K562 (cell line): ENCODE measurements at regions of chr7 and their contacts with region 1.

Region 1: GRCh38 chr7:107044347-107045194 is at the start of gene PRKAR2B:
- DNase-seq: peak; percentile 98 to 100 (median 98)
- ATAC-seq: peak; percentile 83
- H3K4me3 ChIP-seq: peak within 1 kb of the TSS; percentile 84
- H3K27ac ChIP-seq: peak within 1 kb of the TSS; percentile 73
- H3K4me1 ChIP-seq: peaks cover 12 to 39% of the 10 kb centered on the region in 2 experiments
- H3K27me3 ChIP-seq: no peaks in the 10 kb centered on the region
- CTCF ChIP-seq: peak in 2 of 3 experiments; percentile 44 to 54; a peak in 3 of 6 replicates
- EP300 ChIP-seq: no peak; the same call in 1 of the 2 replicates
- POLR2A ChIP-seq: peak; percentile 60; the same call in 1 of the 2 replicates
- RAD21 ChIP-seq: peak; percentile 41 to 54
- polyA plus RNA-seq, gene PRKAR2B: 59.0 to 65.4 TPM

Region 2: GRCh38 chr7:106947244-106947728 is 97.3 kb before region 1 on chr7:
- CTCF ChIA-PET with region 1: interaction called, 4 read pairs
- POLR2A ChIA-PET with region 1: interaction called, 6 read pairs
- in situ Hi-C with region 1: loop called (anchors 5 kb)
- intact Hi-C with region 1: loop called (anchors 1 kb)
- DNase-seq: peak; percentile 88 to 96 (median 90)
- ATAC-seq: peak; percentile 95
- H3K4me3 ChIP-seq: no peak overlapping the region
- H3K27ac ChIP-seq: no peak overlapping the region
- H3K4me1 ChIP-seq: peaks cover 7 to 21% of the 10 kb centered on the region in 2 experiments
- H3K27me3 ChIP-seq: no peaks in the 10 kb centered on the region; a peak in 1 of 5 replicates
- CTCF ChIP-seq: peak; percentile 92 to 99 (median 94)
- EP300 ChIP-seq: peak; percentile 57; the same call in 1 of the 2 replicates
- POLR2A ChIP-seq: no peak
- RAD21 ChIP-seq: peak; percentile 100

Region 3: DNA sequence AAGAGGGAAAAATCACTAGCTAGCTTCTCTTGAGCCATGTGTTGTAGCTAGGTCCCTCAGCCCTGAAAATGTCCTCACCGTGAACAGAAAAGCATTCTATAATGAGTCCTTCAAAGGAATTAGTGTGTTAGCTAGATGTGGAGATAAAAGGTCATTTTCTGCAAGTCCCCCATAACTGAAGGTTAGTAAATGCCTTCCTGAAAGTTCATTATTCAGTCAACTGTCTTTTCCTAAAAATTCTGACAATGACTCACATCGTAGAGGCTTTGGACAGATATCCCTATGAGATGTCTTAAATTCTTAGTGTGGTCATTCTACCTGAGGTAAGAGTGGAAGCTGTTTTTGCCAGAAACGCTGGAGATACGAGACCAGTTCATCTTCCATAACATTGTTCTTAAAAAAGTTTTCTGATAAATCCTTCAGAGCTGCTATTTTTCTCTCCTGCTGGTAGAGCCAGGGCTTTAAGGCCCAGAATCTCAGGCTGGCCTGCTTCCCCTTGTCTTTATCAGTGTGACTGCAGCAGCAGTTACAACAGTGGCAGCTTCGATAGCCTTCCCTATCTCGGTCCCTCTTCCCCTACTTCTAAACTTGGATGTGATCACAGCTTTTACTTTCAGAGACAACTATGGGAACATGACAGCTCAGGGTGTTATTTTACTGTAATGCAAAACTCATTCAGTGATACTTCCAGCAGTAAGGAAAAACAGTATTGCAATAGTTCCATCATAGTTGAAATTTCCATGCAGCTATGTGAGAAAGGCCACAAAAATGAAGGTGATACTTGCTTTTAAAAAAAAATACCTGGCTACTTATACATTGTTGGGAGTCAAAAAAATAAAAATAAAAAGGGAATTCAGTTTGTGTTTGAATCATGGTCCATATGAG is 37.3 kb before region 1 on chr7:
- CTCF ChIA-PET with region 1: no interaction called
- POLR2A ChIA-PET with region 1: interaction called, 11 read pairs
- in situ Hi-C with region 1: no loop called
- intact Hi-C with region 1: loop called (anchors 1 kb)
- DNase-seq: peak; percentile 87 to 99 (median 91)
- ATAC-seq: peak; percentile 85
- H3K4me3 ChIP-seq: peak overlapping the region; percentile 39
- H3K27ac ChIP-seq: peak overlapping the region; percentile 96
- H3K4me1 ChIP-seq: peaks cover 37 to 44% of the 10 kb centered on the region in 2 experiments
- H3K27me3 ChIP-seq: no peaks in the 10 kb centered on the region
- CTCF ChIP-seq: peak in 2 of 3 experiments; percentile 12 to 30; a peak in 2 of 6 replicates
- EP300 ChIP-seq: peak; percentile 99
- POLR2A ChIP-seq: peak; percentile 68
- RAD21 ChIP-seq: peak; percentile 50 to 57

Region 4: DNA sequence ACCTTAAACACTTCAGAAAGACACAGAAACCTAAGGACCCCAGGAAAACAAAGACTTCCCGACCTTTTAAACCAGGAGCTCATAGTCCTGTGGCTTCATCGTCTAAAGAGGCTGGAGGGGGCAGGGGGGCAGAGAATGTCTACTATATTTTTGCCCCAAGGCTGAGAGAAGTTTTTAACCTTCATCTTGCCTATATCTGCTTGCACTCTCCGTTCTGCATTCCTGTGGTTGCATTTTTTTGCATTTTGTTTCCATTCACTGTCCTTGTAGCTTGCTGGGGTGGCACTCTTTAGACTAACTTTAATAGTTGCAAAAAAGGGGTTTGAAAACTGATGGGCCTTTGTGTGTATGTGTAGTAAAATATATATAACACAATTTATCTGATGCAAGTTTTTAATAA is 23.6 kb after region 1 on chr7:
- CTCF ChIA-PET with region 1: no interaction called
- POLR2A ChIA-PET with region 1: interaction called, 12 read pairs
- in situ Hi-C with region 1: no loop called
- intact Hi-C with region 1: no loop called
- DNase-seq: no peak
- ATAC-seq: no peak
- H3K4me3 ChIP-seq: no peak overlapping the region
- H3K27ac ChIP-seq: no peak overlapping the region
- H3K4me1 ChIP-seq: peaks cover 6 to 34% of the 10 kb centered on the region in 2 experiments; a peak in 3 of 5 replicates
- H3K27me3 ChIP-seq: no peaks in the 10 kb centered on the region
- CTCF ChIP-seq: no peak
- EP300 ChIP-seq: no peak
- POLR2A ChIP-seq: no peak
- RAD21 ChIP-seq: no peak

Region 5: DNA sequence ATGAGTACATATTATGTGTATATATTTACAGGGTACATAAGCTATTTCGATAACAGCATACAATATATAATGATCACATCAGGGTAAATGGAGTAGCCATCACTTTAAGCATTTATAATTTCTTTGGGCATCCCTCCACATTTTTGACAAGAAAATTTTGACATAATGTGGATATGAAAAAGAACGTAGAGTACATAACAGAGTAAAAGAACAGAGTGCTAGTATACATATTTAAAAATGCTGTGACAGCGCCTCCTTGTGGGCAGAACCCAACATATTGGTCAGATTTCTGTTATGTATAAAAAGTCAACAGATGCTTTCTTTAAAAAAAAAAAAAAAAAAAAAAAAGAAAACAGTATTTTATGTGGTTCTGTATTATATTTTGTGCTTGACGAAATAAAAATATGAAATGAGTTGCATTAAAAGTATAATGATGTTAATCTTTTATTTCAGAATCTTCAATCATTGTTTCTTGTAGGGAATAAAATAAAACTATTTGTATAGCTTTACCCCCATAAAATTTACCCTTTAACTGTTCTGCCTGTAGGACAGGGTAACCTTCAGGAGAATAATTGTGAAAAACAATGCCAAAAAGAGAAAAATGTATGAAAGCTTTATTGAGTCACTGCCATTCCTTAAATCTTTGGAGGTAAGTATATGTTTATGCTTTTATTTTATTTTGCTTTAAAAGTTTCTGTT is 106.0 kb after region 1 on chr7:
- CTCF ChIA-PET with region 1: no interaction called
- POLR2A ChIA-PET with region 1: no interaction called
- in situ Hi-C with region 1: loop called (anchors 5 kb)
- intact Hi-C with region 1: loop called (anchors 5 kb)
- DNase-seq: peak; percentile 62 to 91 (median 63)
- ATAC-seq: peak; percentile 87
- H3K4me3 ChIP-seq: no peak overlapping the region
- H3K27ac ChIP-seq: peak overlapping the region; percentile 9; the same call in 1 of the 3 replicates
- H3K4me1 ChIP-seq: no peaks in the 10 kb centered on the region
- H3K27me3 ChIP-seq: no peaks in the 10 kb centered on the region
- CTCF ChIP-seq: peak; percentile 64 to 95 (median 67); a peak in 4 of 6 replicates
- EP300 ChIP-seq: no peak
- POLR2A ChIP-seq: no peak
- RAD21 ChIP-seq: peak; percentile 95 to 96